ENCODE measurements at regions of chr15 and their contacts with region 1.

Region 1: DNA sequence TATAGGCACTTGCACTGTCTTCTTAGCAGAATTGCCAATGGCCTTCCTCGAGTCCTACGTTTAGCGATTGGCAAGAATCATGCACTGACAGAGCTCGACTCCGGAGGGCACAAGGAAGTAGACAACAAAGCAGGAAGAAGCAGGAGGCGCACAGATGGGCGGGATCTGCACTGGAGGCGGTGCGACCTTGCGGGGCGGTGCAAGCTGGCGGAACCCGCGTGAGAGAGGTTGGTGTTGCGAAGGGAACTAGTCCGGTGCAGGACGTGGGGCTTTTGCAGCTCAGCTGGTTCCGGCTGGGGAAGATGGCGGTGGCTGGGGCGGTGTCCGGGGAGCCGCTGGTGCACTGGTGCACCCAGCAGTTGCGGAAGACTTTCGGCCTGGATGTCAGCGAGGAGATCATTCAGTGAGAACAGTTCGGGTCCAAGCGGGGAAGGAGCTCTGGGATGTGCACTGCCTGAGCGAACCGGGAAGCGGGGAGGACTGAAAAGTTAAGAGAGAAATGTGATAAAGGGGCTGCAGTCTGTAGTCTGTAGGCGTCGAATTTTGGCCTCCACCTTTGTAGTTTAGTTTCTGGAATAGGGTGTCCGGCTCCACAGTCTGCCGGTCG is at the start of gene TRIP4:
- DNase-seq: peak; percentile 96
- H3K4me3 Mint-ChIP-seq: peak within 1 kb of the TSS; percentile 99
- H3K27ac Mint-ChIP-seq: peak within 1 kb of the TSS; percentile 89
- H3K4me1 Mint-ChIP-seq: peaks cover 17% of the 10 kb centered on the region
- H3K27me3 Mint-ChIP-seq: no peaks in the 10 kb centered on the region
- total RNA-seq, gene TRIP4: 17.5 and 21.7 TPM in 2 replicates

Region 2: DNA sequence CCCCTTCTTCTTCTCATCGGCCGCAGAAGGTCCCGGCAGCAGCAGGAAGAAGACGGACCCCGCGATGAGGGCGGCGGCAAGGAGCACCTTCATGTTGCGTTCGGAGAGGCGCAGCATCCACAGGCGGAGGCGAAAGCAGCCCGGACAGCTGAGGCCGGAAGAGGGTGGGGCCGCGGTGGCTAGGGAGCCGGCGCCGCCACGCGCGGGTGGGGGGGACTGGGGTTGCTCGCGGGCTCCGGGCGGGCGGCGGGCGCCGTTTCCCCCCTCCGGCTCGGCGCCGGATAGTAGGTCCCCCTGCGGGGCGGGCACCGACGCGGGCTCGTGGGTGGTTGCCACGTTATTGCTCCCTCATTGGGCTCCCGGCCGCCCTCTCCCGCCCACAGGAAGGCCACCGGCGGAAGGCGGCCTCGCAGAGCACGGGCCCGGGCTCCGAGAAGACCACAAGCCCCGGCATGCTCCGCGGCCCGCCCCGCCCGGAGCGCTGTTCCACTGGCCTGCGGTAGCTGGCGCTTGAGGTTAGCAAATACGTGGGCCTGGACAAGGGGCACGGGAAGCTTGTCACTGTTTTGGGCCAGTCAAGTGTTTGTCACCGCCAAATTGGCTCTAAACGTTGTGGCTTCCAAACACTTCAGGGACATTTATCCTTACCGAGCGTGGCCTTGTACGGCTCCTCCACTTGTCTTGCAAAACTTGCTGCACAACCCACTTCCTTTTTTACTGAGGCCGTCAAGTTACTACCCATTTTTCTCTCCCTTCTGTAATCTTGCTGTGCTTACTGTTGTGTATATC is 224.6 kb before region 1 on chr15 and contains the start of gene PPIB:
- intact Hi-C with region 1: loop called (anchors 1 kb)
- DNase-seq: peak; percentile 97
- H3K4me3 Mint-ChIP-seq: peak within 1 kb of the TSS; percentile 94
- H3K27ac Mint-ChIP-seq: peak within 1 kb of the TSS; percentile 93
- H3K4me1 Mint-ChIP-seq: peaks cover 56% of the 10 kb centered on the region
- H3K27me3 Mint-ChIP-seq: no peaks in the 10 kb centered on the region
- total RNA-seq, gene PPIB: 383 and 388 TPM in 2 replicates

Region 3: GRCh38 chr15:64443747-64444621 is 56.3 kb after region 1 on chr15:
- intact Hi-C with region 1: loop called (anchors 5 kb)
- DNase-seq: no peak
- H3K4me3 Mint-ChIP-seq: peak overlapping the region; percentile 74
- H3K27ac Mint-ChIP-seq: peak overlapping the region; percentile 94
- H3K4me1 Mint-ChIP-seq: peaks cover 49% of the 10 kb centered on the region
- H3K27me3 Mint-ChIP-seq: no peaks in the 10 kb centered on the region

Region 4: GRCh38 chr15:64836023-64836536 is 448.4 kb after region 1 on chr15:
- intact Hi-C with region 1: loop called (anchors 5 kb)
- DNase-seq: no peak
- H3K4me3 Mint-ChIP-seq: peak overlapping the region; percentile 57
- H3K27ac Mint-ChIP-seq: peak overlapping the region; percentile 80
- H3K4me1 Mint-ChIP-seq: peaks cover 41% of the 10 kb centered on the region
- H3K27me3 Mint-ChIP-seq: no peaks in the 10 kb centered on the region

Region 5: GRCh38 chr15:65133548-65134200 is 746.0 kb after region 1 on chr15 and contains the start of gene PDCD7:
- intact Hi-C with region 1: loop called (anchors 5 kb)
- DNase-seq: peak; percentile 80
- H3K4me3 Mint-ChIP-seq: peak within 1 kb of the TSS; percentile 92
- H3K27ac Mint-ChIP-seq: peak within 1 kb of the TSS; percentile 93
- H3K4me1 Mint-ChIP-seq: peaks cover 31% of the 10 kb centered on the region
- H3K27me3 Mint-ChIP-seq: peaks cover 2% of the 10 kb centered on the region
- total RNA-seq, gene PDCD7: 51.2 and 54.7 TPM in 2 replicates